CD14-positive monocyte (primary cell): ENCODE measurements at regions of chr16 and their contacts with region 1.

Region 1: DNA sequence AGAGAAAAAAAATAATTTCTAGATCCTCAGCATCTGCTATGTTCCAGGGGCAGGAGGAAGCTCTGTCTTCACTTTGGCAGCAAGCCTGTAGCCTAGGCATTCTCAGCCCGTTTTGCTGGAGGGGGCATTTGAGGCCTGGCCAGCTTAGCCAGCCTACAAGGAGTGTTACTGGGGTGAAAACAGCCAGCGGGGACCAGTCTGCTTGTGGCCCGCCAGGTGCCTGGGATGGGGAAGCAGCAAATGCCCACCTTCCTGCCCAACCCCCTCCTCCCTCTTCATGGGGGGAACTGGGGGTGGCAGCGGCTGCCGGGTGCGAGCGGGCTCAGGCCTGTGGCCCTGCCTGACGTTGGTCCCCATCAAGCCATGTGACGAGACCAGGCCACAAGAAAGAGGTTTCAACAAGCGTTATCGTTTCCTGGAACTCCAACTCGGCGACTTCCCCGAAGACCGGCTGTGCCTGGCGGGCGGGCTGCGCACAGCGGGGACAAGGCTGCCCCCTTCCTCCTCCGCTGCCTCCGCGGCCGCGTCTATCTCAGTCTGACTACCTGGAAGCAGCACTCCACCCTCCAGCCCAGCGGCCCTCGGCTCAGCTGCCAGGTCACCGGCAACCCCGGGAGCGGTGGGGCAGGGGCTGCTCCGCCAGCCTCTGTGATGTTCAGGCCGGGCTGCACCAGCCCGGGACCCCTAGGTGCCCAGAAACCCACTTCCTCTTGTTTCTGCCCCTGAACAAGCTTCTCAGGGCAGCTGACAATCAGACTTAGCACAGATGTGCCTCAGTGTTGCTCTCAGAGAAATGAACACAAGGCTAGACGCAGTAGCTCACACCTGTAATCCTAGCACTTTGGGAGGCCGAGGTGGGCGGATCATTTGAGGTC is 22.9 kb downstream of the SOCS1 start:
- DNase-seq: peak in 2 of 3 donors; percentile 33 to 52
- H3K4me3 ChIP-seq: peak overlapping the region in 1 of 3 experiments; percentile 35
- H3K4me3 Mint-ChIP-seq: peak overlapping the region; percentile 6 to 62
- H3K27ac ChIP-seq: peak overlapping the region in 1 of 2 donors; percentile 0
- H3K27ac Mint-ChIP-seq: peak overlapping the region in 2 of 7 donors; percentile 40 to 74
- H3K4me1 ChIP-seq: peaks cover 40 to 44% of the 10 kb centered on the region in 2 donors
- H3K4me1 Mint-ChIP-seq: peaks cover 44% of the 10 kb centered on the region
- H3K27me3 ChIP-seq: no peaks in the 10 kb centered on the region
- H3K27me3 Mint-ChIP-seq: peaks cover 4 to 12% (median 7%) of the 10 kb centered on the region in 3 donors
- CTCF ChIP-seq: no peak

Region 2: GRCh38 chr16:11218604-11218962 is 14.5 kb before region 1 on chr16:
- intact Hi-C with region 1: no loop called
- DNase-seq: peak in 1 of 3 donors; percentile 40
- H3K4me3 ChIP-seq: no peak overlapping the region
- H3K4me3 Mint-ChIP-seq: no peak overlapping the region
- H3K27ac ChIP-seq: peak overlapping the region in 1 of 2 donors; percentile 17
- H3K27ac Mint-ChIP-seq: peak overlapping the region in 4 of 7 donors; percentile 6 to 85 (median 76)
- H3K4me1 ChIP-seq: peaks cover 12 to 20% of the 10 kb centered on the region in 2 donors
- H3K4me1 Mint-ChIP-seq: peaks cover 12% of the 10 kb centered on the region
- H3K27me3 ChIP-seq: no peaks in the 10 kb centered on the region
- H3K27me3 Mint-ChIP-seq: peaks cover 0 to 6% (median 4%) of the 10 kb centered on the region in 3 donors
- CTCF ChIP-seq: peak; percentile 79

Region 3: GRCh38 chr16:11417487-11417886 is 184.4 kb after region 1 on chr16:
- intact Hi-C with region 1: no loop called
- DNase-seq: no peak
- H3K4me3 ChIP-seq: no peak overlapping the region
- H3K4me3 Mint-ChIP-seq: no peak overlapping the region
- H3K27ac ChIP-seq: no peak overlapping the region
- H3K27ac Mint-ChIP-seq: no peak overlapping the region
- H3K4me1 ChIP-seq: no peaks in the 10 kb centered on the region
- H3K4me1 Mint-ChIP-seq: no peaks in the 10 kb centered on the region
- H3K27me3 ChIP-seq: no peaks in the 10 kb centered on the region
- H3K27me3 Mint-ChIP-seq: peaks cover 1 to 7% (median 6%) of the 10 kb centered on the region in 3 donors
- CTCF ChIP-seq: no peak

Region 4: DNA sequence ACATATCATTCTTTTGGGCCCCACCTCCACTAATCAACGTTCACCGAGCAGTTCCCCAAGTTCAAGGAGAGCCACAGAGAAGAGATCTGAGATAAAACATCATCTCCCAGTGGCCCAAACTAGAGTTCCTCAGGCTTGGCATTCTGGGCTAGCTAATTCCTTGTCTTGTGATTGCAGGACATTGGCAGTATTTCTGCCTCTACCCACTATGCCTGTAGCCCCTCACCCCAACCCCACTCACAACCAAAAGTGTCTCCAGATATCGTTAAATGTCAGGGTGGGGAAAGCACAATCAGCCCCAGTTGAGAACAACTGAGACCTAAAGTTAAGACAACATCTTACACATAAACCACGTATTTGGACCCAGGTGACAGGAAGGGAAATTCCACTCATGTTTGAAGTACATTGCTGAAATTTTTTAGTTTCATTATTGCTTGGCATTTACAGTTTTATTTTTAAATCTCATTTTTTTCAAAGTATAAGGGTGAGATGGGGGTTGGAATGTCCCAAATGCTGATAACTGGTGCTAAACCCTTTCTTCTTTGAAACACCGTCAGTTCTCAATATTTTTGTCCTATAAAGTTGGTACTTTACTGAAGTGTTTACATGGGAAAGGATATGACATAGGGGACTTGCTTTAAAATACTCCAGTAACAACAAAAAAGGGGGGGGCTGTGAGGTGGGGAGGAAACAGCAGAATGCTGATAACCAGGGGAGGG is 550.4 kb after region 1 on chr16:
- intact Hi-C with region 1: loop called in 1 of 2 experiments (anchors 5 kb)
- DNase-seq: peak; percentile 21 to 62 (median 29)
- H3K4me3 ChIP-seq: peak overlapping the region; percentile 12 to 62 (median 40)
- H3K4me3 Mint-ChIP-seq: peak overlapping the region; percentile 72 to 79
- H3K27ac ChIP-seq: peak overlapping the region; percentile 55 to 89
- H3K27ac Mint-ChIP-seq: peak overlapping the region; percentile 90 to 96 (median 94)
- H3K4me1 ChIP-seq: peaks cover 23 to 29% of the 10 kb centered on the region in 2 donors
- H3K4me1 Mint-ChIP-seq: peaks cover 31% of the 10 kb centered on the region
- H3K27me3 ChIP-seq: no peaks in the 10 kb centered on the region
- H3K27me3 Mint-ChIP-seq: peaks cover 0 to 1% (median 0%) of the 10 kb centered on the region in 3 donors
- CTCF ChIP-seq: no peak